CD8-positive, alpha-beta T cell (primary cell): ENCODE measurements at regions of chr1 and their contacts with region 1.

Region 1: DNA sequence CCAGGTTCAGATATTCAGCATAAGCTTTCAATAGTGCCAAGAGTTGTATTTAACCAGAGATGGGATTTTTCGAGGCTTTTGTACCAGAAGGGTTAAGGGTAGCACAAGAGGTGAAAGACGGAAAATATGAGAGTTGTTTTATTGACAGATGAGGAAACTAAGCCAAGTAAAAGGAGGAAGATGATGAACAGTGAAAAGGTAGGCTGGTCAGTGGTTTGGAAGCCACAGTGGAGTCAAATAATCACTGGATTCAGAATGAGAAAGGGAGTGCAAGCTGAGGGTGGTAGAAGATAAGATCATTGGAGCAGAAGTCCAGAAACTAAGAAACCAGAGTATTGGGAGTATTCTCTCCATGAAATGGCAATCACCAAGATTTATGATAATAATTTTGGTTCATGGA is 45.7 kb downstream of the ANGPTL1 start:
- DNase-seq: no peak
- ATAC-seq: no peak
- H3K4me3 ChIP-seq: no peak overlapping the region
- H3K4me3 Mint-ChIP-seq: no peak overlapping the region
- H3K27ac ChIP-seq: no peak overlapping the region
- H3K27ac Mint-ChIP-seq: no peak overlapping the region
- H3K4me1 ChIP-seq: no peaks in the 10 kb centered on the region
- H3K4me1 Mint-ChIP-seq: no peaks in the 10 kb centered on the region
- H3K27me3 ChIP-seq: no peaks in the 10 kb centered on the region
- H3K27me3 Mint-ChIP-seq: no peaks in the 10 kb centered on the region
- CTCF ChIP-seq: no peak

Region 2: DNA sequence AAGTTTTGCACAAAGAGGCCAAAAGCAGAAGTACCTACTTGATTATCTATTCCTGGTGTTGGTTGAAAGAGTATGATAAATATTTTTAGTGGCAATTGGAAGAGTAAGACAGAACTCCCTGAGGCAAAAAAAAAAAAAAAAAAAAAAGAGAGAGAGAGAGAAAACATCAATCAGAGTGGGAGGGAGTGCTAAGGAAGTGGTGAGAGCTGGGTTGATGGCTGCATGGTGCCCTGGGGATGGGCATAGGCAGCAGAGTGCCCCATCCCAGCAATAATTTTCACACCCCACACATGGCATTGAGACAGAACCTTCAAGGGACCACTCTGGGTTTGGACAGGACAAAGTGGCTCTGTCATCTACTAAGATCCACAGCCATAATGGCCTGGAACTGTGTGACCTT is 141.1 kb after region 1 on chr1:
- CTCF ChIA-PET with region 1: no interaction called
- POLR2A ChIA-PET with region 1: no interaction called
- intact Hi-C with region 1: loop called in 1 of 2 experiments (anchors 5 kb)
- DNase-seq: no peak
- ATAC-seq: no peak
- H3K4me3 ChIP-seq: no peak overlapping the region
- H3K4me3 Mint-ChIP-seq: no peak overlapping the region
- H3K27ac ChIP-seq: no peak overlapping the region
- H3K27ac Mint-ChIP-seq: no peak overlapping the region
- H3K4me1 ChIP-seq: no peaks in the 10 kb centered on the region
- H3K4me1 Mint-ChIP-seq: no peaks in the 10 kb centered on the region
- H3K27me3 ChIP-seq: no peaks in the 10 kb centered on the region
- H3K27me3 Mint-ChIP-seq: peaks cover 2% of the 10 kb centered on the region
- CTCF ChIP-seq: no peak